ENCODE measurements at regions of chr7 and their contacts with region 1.

Region 1: DNA sequence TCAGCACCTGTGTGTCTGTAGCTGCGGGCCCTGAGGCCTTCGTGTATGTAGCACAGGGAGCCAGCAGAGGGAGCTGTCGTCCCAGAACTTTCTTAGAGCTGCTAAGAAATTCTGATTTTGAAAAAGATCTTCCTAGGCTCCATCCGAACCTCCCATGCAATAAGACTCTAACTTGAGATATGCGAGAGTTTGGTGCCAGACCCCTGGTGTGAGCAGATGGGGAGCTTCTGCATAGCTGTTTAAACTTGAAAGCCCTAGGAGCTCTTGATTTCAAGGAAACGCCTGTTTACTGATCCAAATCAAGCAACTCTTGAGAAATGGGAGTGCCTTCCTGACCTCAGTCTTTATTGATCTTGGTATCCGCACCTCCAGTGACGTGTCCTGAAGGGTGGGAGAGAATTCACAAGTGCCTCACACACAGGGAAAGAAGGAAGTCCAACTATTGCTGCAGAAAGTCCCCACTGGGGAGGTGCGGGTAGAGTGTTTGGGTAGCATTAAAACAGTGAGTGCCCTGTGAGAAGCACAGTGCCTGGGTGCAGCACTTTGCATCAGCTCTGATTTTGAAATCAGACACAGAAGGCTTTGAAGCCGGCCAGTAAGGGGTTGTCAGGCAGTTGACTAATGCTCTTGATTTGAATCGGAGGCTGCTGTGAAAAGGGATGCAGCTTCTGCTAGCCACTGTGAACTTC is 66.4 kb upstream of the STRIP2 start:
- DNase-seq: peak; percentile 53 to 74
- ATAC-seq: peak; percentile 86 to 94
- H3K4me3 ChIP-seq: no peak overlapping the region
- H3K27ac ChIP-seq: peak overlapping the region in 3 of 4 donors; percentile 28 to 47 (median 28)
- H3K4me1 ChIP-seq: peaks cover 12 to 17% of the 10 kb centered on the region in 2 donors
- H3K27me3 ChIP-seq: no peaks in the 10 kb centered on the region
- CTCF ChIP-seq: peak; percentile 77 to 92 (median 88)
- POLR2A ChIP-seq: no peak

Region 2: DNA sequence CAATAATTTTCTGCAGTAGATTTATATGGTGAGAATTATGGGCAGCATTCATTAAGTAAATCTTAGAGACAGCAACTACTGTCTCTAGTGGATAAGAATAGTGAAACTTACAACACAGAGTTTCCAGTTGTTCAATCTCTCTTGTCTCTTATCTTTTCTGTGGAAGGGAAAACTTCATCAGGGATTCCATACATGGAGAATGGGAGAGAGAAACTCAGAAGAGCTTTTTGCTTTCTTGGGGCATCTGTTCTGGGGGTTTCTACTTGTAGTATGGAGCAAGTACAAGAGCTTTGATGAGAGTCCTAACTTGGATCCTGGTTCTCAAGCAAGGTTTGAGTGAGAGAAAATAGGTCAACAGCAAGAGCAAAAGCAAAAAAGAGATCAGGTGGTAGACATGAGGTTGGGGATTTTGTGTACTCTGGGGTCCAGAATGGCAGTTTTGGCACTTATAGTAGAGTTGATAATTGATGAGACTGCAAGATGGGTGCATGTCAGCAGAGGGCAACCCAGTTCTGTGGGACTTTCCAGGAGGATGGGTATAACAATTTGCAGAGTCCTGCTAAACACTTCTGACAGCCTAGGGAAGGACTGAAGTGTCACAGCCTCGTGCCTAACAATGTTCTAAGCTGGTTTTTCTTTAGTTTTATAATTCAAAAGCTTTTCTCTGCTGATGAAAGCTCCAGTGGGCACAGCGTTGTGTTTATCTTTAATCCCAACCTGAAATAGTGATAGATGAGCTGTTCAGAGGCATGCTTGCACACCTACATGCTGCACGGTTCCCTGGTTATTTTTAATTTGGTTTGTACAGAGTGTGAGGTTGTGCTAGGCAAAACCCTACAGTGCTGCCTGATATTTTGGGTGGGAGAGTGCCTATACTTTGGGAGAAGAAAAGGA is 34.4 kb after region 1 on chr7:
- in situ Hi-C with region 1: no loop called
- intact Hi-C with region 1: loop called (anchors 5 kb)
- DNase-seq: no peak
- ATAC-seq: peak; percentile 65 to 82
- H3K4me3 ChIP-seq: no peak overlapping the region
- H3K27ac ChIP-seq: peak overlapping the region; percentile 50 to 76 (median 71)
- H3K4me1 ChIP-seq: peaks cover 15 to 38% of the 10 kb centered on the region in 2 donors
- H3K27me3 ChIP-seq: no peaks in the 10 kb centered on the region
- CTCF ChIP-seq: peak in 4 of 5 experiments; percentile 6 to 41 (median 25)
- POLR2A ChIP-seq: no peak

Region 3: GRCh38 chr7:129443612-129444011 is 75.8 kb after region 1 on chr7:
- in situ Hi-C with region 1: no loop called
- intact Hi-C with region 1: no loop called
- DNase-seq: peak; percentile 43 to 52
- ATAC-seq: peak; percentile 83 to 91
- H3K4me3 ChIP-seq: no peak overlapping the region
- H3K27ac ChIP-seq: peak overlapping the region; percentile 50 to 67 (median 57)
- H3K4me1 ChIP-seq: peaks cover 30 to 40% of the 10 kb centered on the region in 2 donors
- H3K27me3 ChIP-seq: no peaks in the 10 kb centered on the region
- CTCF ChIP-seq: no peak
- POLR2A ChIP-seq: no peak

Region 4: DNA sequence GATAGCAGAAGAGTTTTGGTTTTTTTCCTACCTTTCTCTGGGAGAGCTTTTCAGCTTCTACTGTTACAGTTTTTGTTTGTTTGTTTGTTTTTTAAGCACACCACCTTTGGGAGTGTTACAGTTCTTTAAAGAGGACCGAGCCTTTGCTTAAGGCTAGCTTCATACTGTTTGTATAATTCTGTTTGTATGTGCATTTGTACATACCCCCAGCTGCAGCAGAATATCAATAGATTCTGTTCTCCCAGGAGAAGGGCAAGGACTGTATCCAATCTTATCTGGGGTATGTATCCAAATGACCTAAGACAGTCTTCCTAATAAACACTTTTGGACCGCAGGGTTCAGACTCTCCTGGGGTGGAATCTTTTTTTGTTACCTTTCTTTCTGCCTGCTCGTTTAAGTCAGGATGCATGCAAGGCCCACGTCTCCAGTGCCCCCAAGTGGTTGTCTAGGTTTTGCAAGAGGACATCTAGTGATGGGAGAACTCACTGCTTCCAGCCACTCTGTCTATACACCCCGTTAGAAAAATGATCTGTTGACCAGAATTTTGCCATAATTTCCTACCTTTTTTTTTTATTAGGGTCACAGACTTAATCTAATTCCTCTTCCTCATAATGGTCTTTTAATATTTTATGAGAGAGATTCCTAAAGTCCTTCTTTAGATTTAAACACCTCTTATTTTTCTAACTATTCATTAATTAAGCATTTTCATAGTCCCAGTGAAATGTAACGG is 267.6 kb after region 1 on chr7:
- in situ Hi-C with region 1: loop called in 3 of 4 experiments (anchors 25 kb)
- intact Hi-C with region 1: loop called (anchors 10 kb)
- DNase-seq: peak; percentile 7 to 46
- ATAC-seq: peak; percentile 70 to 94
- H3K4me3 ChIP-seq: no peak overlapping the region
- H3K27ac ChIP-seq: no peak overlapping the region
- H3K4me1 ChIP-seq: peaks cover 9 to 10% of the 10 kb centered on the region in 2 donors
- H3K27me3 ChIP-seq: no peaks in the 10 kb centered on the region
- CTCF ChIP-seq: peak; percentile 33 to 80 (median 63)
- POLR2A ChIP-seq: no peak

Region 5: DNA sequence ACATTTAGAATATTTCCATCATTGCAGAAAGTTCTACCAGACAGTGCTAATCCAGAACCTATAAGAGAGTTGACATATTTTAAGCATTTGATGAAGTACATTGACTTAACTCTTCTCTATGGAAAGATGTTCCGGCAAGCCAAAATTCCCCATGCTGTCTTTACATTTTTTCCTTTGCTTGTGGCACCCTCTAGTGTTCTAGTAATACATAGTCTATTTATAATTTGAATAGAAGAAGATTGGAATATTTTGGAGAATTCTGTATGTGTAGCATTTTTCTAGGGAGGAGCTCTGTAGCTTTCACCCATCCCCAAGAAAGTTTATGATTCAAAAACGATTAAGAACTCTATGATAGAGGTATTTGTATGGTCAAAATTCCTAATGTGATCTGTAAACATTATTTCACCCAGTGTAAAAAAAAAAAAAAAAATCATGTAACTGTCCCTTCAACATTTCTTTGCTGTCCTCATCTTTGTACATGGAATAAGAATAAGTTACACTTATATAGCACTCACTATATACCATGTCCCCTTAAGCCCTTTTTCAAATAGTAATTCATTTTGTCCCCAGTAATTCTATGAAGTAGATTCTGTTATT is 276.9 kb after region 1 on chr7:
- in situ Hi-C with region 1: loop called in 3 of 4 experiments (anchors 25 kb)
- intact Hi-C with region 1: loop called (anchors 10 kb)
- DNase-seq: no peak
- ATAC-seq: no peak
- H3K4me3 ChIP-seq: no peak overlapping the region
- H3K27ac ChIP-seq: no peak overlapping the region
- H3K4me1 ChIP-seq: peaks cover 7 to 16% of the 10 kb centered on the region in 2 donors
- H3K27me3 ChIP-seq: no peaks in the 10 kb centered on the region
- CTCF ChIP-seq: peak in 4 of 5 experiments; percentile 23 to 49 (median 34)
- POLR2A ChIP-seq: no peak